ENCODE measurements at regions of chr4 and their contacts with region 1.

Region 1: DNA sequence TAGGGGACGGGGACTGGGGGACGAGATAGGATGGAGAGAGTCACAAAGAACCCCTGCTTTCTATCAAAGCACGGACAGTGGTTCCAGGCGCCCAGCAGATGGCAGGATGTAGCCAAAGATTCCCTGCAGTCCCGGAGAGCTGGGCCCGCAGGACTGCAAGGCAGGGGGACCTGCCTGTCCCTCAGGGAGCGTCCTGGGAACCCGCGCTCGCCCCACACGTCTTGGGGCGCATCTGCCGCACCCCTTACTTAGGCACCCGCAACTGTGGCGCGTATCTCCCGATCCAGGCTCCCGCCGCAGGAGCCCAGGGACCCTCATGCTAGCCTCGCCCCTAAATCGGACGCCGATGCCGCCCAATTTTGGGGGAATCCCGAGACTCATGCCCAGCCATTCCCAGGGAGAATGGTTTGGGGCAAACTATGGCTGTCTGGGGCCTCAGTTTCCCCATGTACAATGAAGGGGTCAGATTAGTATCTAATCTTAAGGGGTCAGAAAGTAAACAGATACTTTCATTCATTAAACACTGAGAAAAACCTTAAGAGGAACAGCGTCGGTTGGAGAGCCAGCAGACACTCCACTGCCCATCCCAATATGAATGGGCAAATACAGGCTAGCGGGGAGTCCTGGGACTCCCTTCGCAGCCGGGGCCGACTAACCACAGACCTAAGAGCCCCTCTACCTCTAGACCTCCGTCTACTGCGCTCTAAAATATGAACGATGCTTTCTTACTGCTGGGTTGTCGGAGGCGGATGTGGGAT is 581 bp upstream of the STK32B start:
- DNase-seq: peak; percentile 63 to 73
- H3K4me3 ChIP-seq: peak overlapping the region; percentile 34
- H3K4me3 Mint-ChIP-seq: peak overlapping the region; percentile 73
- H3K27ac Mint-ChIP-seq: peak overlapping the region; percentile 42
- H3K4me1 ChIP-seq: peaks cover 30% of the 10 kb centered on the region
- H3K4me1 Mint-ChIP-seq: peaks cover 15% of the 10 kb centered on the region
- H3K27me3 ChIP-seq: no peaks in the 10 kb centered on the region
- H3K27me3 Mint-ChIP-seq: peaks cover 2% of the 10 kb centered on the region
- CTCF ChIP-seq: peak; percentile 60

Region 2: DNA sequence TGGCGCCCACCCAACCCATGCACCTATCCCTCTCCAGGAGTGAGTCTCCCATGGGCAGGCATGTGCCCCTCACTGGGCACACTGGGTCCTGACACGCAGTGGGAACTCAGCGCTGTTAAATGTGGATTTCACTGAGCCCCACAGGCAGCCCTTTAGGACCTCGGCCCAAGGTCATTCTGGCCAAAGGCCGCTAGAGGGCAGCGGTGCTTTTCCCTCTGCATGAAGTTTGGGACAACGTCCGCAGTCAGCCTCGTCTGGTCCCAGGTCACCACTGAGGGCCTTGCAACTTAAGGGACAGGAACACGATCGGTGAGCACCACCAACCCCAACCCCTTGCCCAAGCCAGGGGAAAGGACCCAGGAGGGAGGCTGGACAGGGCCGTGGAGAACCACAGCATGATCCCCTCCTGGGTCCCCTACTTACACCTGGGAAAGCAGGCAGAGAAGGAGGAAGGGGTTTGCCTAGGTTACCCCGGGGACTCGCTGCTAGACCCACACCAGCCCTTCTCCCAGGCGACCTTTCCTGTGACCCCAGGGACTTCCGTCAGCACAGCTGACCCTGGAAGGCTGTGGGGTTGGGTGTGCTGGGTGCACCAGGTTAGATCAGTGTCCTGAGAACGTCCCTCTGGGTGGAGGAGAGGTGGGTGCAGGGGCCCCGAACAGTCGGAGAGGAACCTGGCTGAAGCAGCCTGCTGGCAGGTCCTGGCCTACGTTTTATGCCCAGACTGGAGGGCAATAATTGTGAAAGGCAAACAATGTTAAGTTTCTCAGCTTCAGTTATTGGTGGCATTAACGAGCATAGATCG is 55.4 kb before region 1 on chr4:
- CTCF ChIA-PET with region 1: no interaction called
- POLR2A ChIA-PET with region 1: no interaction called
- intact Hi-C with region 1: loop called (anchors 2 kb)
- DNase-seq: peak; percentile 75 to 82
- H3K4me3 ChIP-seq: no peak overlapping the region
- H3K4me3 Mint-ChIP-seq: peak overlapping the region; percentile 30
- H3K27ac Mint-ChIP-seq: no peak overlapping the region
- H3K4me1 ChIP-seq: 0 out of 2 replicates have a peak, but pooled peaks cover 6% of the 10 kb centered on the region
- H3K4me1 Mint-ChIP-seq: no peaks in the 10 kb centered on the region
- H3K27me3 ChIP-seq: no peaks in the 10 kb centered on the region
- H3K27me3 Mint-ChIP-seq: peaks cover 3% of the 10 kb centered on the region
- CTCF ChIP-seq: peak; percentile 84 to 90

Region 3: GRCh38 chr4:5114950-5115349 is 64.3 kb after region 1 on chr4:
- CTCF ChIA-PET with region 1: no interaction called
- POLR2A ChIA-PET with region 1: no interaction called
- intact Hi-C with region 1: no loop called
- DNase-seq: peak; percentile 35 to 68
- H3K4me3 ChIP-seq: no peak overlapping the region
- H3K4me3 Mint-ChIP-seq: peak overlapping the region; percentile 82
- H3K27ac Mint-ChIP-seq: peak overlapping the region; percentile 83
- H3K4me1 ChIP-seq: peaks cover 20% of the 10 kb centered on the region
- H3K4me1 Mint-ChIP-seq: peaks cover 31% of the 10 kb centered on the region
- H3K27me3 ChIP-seq: no peaks in the 10 kb centered on the region
- H3K27me3 Mint-ChIP-seq: no peaks in the 10 kb centered on the region
- CTCF ChIP-seq: no peak

Region 4: GRCh38 chr4:5125321-5125720 is 74.6 kb after region 1 on chr4:
- CTCF ChIA-PET with region 1: no interaction called
- POLR2A ChIA-PET with region 1: no interaction called
- intact Hi-C with region 1: no loop called
- DNase-seq: no peak
- H3K4me3 ChIP-seq: no peak overlapping the region
- H3K4me3 Mint-ChIP-seq: no peak overlapping the region
- H3K27ac Mint-ChIP-seq: no peak overlapping the region
- H3K4me1 ChIP-seq: 0 out of 2 replicates have a peak, but pooled peaks cover 5% of the 10 kb centered on the region
- H3K4me1 Mint-ChIP-seq: no peaks in the 10 kb centered on the region
- H3K27me3 ChIP-seq: no peaks in the 10 kb centered on the region
- H3K27me3 Mint-ChIP-seq: no peaks in the 10 kb centered on the region
- CTCF ChIP-seq: no peak

Region 5: GRCh38 chr4:5142726-5143125 is 92.0 kb after region 1 on chr4:
- CTCF ChIA-PET with region 1: interaction called, 4 read pairs
- POLR2A ChIA-PET with region 1: no interaction called
- intact Hi-C with region 1: loop called (anchors 1 kb)
- DNase-seq: peak in 1 of 2 experiments; percentile 39
- H3K4me3 ChIP-seq: no peak overlapping the region
- H3K4me3 Mint-ChIP-seq: no peak overlapping the region
- H3K27ac Mint-ChIP-seq: no peak overlapping the region
- H3K4me1 ChIP-seq: no peaks in the 10 kb centered on the region
- H3K4me1 Mint-ChIP-seq: peaks cover 5% of the 10 kb centered on the region
- H3K27me3 ChIP-seq: no peaks in the 10 kb centered on the region
- H3K27me3 Mint-ChIP-seq: no peaks in the 10 kb centered on the region
- CTCF ChIP-seq: peak; percentile 30 to 53

Region 6: GRCh38 chr4:5378002-5378401 is 327.3 kb after region 1 on chr4:
- CTCF ChIA-PET with region 1: no interaction called
- POLR2A ChIA-PET with region 1: no interaction called
- intact Hi-C with region 1: loop called (anchors 10 kb)
- DNase-seq: no peak
- H3K4me3 ChIP-seq: no peak overlapping the region
- H3K4me3 Mint-ChIP-seq: no peak overlapping the region
- H3K27ac Mint-ChIP-seq: no peak overlapping the region
- H3K4me1 ChIP-seq: no peaks in the 10 kb centered on the region
- H3K4me1 Mint-ChIP-seq: no peaks in the 10 kb centered on the region
- H3K27me3 ChIP-seq: no peaks in the 10 kb centered on the region
- H3K27me3 Mint-ChIP-seq: no peaks in the 10 kb centered on the region
- CTCF ChIP-seq: no peak

Region 7: GRCh38 chr4:5460116-5460801 is 409.6 kb after region 1 on chr4:
- CTCF ChIA-PET with region 1: interaction called, 5 read pairs
- POLR2A ChIA-PET with region 1: no interaction called
- intact Hi-C with region 1: loop called (anchors 1 kb)
- DNase-seq: peak in 1 of 2 experiments; percentile 30
- H3K4me3 ChIP-seq: no peak overlapping the region
- H3K4me3 Mint-ChIP-seq: no peak overlapping the region
- H3K27ac Mint-ChIP-seq: no peak overlapping the region
- H3K4me1 ChIP-seq: no peaks in the 10 kb centered on the region
- H3K4me1 Mint-ChIP-seq: no peaks in the 10 kb centered on the region
- H3K27me3 ChIP-seq: no peaks in the 10 kb centered on the region
- H3K27me3 Mint-ChIP-seq: peaks cover 5% of the 10 kb centered on the region
- CTCF ChIP-seq: peak in 1 of 2 experiments; percentile 41

Region 8: GRCh38 chr4:5812506-5813229 is 762.0 kb after region 1 on chr4:
- CTCF ChIA-PET with region 1: no interaction called
- POLR2A ChIA-PET with region 1: no interaction called
- intact Hi-C with region 1: loop called (anchors 2 kb)
- DNase-seq: peak in 1 of 2 experiments; percentile 60
- H3K4me3 ChIP-seq: no peak overlapping the region
- H3K4me3 Mint-ChIP-seq: no peak overlapping the region
- H3K27ac Mint-ChIP-seq: no peak overlapping the region
- H3K4me1 ChIP-seq: no peaks in the 10 kb centered on the region
- H3K4me1 Mint-ChIP-seq: no peaks in the 10 kb centered on the region
- H3K27me3 ChIP-seq: no peaks in the 10 kb centered on the region; the same call in 1 of the 2 replicates
- H3K27me3 Mint-ChIP-seq: peaks cover 5% of the 10 kb centered on the region
- CTCF ChIP-seq: peak; percentile 55 to 60

Measured in Caco-2 (cell line).